ENCODE measurements at regions of chr15 and their contacts with region 1.

Region 1: DNA sequence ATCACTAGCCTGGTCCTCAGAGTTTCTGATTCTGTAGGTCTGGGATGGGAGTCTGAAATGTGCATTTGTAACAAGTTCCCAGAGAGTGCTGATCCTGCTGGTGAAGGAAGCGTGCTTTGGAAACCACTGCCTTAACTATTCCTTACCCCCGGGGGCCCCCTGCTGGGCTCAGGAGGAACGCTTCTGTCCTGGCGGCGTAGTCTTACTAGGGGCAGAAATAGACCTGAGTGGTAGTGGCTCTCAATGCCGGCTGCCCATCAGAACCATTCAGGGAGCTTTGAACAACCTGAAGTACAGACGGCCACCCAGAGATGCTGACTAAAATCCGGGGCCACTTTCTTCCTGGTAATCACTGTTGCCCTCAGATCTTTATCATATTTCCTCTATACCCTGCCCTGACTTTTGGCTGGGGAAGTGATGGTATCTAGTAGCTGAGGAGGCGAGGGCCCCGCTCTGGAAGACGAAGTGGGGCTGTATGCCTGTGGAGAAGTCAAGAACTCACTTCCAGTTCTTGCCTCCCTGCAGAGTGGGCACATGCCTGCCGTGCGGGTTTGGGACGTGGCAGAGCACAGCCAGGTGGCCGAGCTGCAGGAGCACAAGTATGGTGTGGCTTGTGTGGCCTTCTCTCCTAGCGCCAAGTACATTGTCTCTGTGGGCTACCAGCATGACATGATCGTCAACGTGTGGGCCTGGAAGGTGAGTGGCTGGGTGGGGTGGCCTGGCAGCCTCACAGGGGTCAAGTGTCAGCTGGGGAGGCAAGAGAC is 16.3 kb upstream of the JMJD7 start:
- DNase-seq: peak; percentile 60
- H3K4me3 ChIP-seq: no peak overlapping the region
- H3K27ac ChIP-seq: no peak overlapping the region
- H3K4me1 ChIP-seq: peaks cover 24% of the 10 kb centered on the region
- H3K27me3 ChIP-seq: no peaks in the 10 kb centered on the region
- CTCF ChIP-seq: peak; percentile 87 to 93

Region 2: GRCh38 chr15:41465822-41466421 is 345.7 kb before region 1 on chr15:
- CTCF ChIA-PET with region 1: no interaction called
- dilution Hi-C with region 1: no loop called
- in situ Hi-C with region 1: no loop called
- intact Hi-C with region 1: loop called (anchors 2 kb)
- DNase-seq: peak; percentile 37
- H3K4me3 ChIP-seq: no peak overlapping the region
- H3K27ac ChIP-seq: no peak overlapping the region
- H3K4me1 ChIP-seq: no peaks in the 10 kb centered on the region
- H3K27me3 ChIP-seq: no peaks in the 10 kb centered on the region
- CTCF ChIP-seq: peak; percentile 99 to 100

Region 3: GRCh38 chr15:41557673-41558399 is 253.8 kb before region 1 on chr15:
- CTCF ChIA-PET with region 1: no interaction called
- dilution Hi-C with region 1: no loop called
- in situ Hi-C with region 1: no loop called
- intact Hi-C with region 1: loop called (anchors 1 kb)
- DNase-seq: peak; percentile 49
- H3K4me3 ChIP-seq: peak overlapping the region in 2 of 3 experiments; percentile 42 to 51
- H3K27ac ChIP-seq: no peak overlapping the region
- H3K4me1 ChIP-seq: peaks cover 17% of the 10 kb centered on the region
- H3K27me3 ChIP-seq: no peaks in the 10 kb centered on the region
- CTCF ChIP-seq: peak; percentile 88 to 92

Region 4: DNA sequence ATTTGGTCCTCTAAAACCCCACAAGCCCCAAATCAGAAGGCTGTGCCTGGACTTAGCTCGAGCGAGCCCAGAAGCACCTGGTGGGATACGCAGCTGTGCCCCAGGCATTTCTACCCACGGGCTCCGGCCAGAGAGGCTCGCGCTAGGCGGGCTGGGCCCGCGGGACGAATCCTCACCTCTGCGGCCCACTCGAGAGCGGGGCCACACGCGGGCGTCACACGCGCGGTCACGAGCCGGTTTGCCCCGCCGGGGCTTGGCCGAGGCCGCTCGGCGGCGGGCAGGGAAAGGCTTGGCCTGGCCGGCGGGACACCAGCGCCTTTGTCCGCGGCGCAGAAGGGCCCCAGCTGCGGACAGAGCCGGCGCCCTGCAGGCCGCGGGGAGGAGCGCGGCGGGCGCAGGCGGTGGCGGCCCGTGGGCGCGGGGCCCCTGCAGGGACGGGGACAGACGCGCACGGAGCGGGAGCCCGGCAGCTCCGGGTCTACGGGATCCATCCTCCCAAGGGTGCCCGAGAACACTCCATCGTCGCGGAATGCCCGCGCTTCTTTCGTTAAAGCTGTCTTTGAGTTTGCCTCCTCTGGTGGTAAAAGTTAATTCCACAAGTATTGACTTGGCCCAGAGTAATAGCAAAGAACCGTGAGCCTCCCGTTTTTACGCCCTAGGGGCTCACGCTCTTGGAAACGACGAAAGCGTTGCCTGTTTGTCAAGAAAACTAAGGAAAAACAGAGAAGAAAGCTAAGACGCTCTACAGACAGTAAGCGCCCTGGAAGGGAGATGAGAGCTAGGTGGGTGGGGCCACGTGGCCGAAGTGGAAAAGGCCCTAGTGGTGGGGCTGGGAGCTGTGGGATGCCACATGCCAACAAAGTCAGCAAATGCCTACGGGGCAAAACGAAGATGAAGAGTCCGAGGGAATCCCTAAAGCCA is 226.2 kb before region 1 on chr15:
- CTCF ChIA-PET with region 1: interaction called, 21 read pairs
- dilution Hi-C with region 1: no loop called
- in situ Hi-C with region 1: no loop called
- intact Hi-C with region 1: no loop called
- DNase-seq: peak; percentile 55
- H3K4me3 ChIP-seq: peak overlapping the region; percentile 6 to 45 (median 34)
- H3K27ac ChIP-seq: no peak overlapping the region
- H3K4me1 ChIP-seq: peaks cover 12% of the 10 kb centered on the region
- H3K27me3 ChIP-seq: no peaks in the 10 kb centered on the region
- CTCF ChIP-seq: peak; percentile 11 to 26

Region 5: DNA sequence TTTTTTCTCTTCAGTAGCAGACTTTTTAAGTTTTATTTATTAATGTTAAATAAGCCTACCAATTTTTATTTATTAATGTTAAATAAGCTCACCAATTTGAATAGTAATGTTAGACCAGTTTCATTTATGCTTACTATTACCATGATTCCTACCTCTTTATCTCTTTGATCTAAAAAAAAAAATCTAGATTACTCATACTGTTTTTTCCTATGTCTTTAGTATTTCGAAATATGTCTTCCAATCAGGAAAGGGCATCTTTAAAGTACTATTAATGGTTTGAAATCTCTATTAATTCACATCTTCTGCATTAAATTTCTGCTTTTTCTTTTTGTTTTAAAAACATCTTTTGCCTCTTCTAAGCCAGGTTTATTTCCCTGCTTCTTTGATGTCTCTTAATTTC is 64.8 kb before region 1 on chr15:
- CTCF ChIA-PET with region 1: no interaction called
- dilution Hi-C with region 1: loop called (anchors 5 kb)
- in situ Hi-C with region 1: no loop called
- intact Hi-C with region 1: no loop called
- DNase-seq: peak; percentile 19
- H3K4me3 ChIP-seq: no peak overlapping the region
- H3K27ac ChIP-seq: no peak overlapping the region
- H3K4me1 ChIP-seq: no peaks in the 10 kb centered on the region
- H3K27me3 ChIP-seq: no peaks in the 10 kb centered on the region
- CTCF ChIP-seq: no peak

Region 6: DNA sequence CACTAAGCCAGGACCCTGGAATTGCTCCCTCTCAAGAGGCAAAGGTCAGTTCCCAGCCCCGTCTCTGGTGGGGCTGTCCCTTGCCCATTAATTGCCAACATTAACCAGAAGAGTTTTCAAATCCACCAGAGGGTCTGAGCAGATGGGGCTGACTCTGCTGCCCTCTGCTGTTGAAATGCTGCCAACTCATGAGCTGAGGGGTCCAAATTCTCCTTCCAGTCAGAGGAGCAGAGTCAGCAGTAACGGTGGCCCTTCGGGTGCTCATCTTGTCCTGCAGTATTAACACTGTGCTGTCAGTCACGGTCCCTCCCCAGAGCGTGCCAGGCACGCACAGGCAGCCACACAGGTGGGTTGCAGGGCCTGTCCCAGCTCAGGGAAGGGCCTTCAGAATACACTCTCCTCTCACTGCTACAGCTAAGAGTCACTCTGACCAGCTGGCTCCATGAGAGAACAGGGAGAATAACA is 93.0 kb after region 1 on chr15:
- CTCF ChIA-PET with region 1: no interaction called
- dilution Hi-C with region 1: loop called (anchors 5 kb)
- in situ Hi-C with region 1: no loop called
- intact Hi-C with region 1: loop called (anchors 1 kb)
- DNase-seq: peak; percentile 42
- H3K4me3 ChIP-seq: no peak overlapping the region
- H3K27ac ChIP-seq: no peak overlapping the region
- H3K4me1 ChIP-seq: no peaks in the 10 kb centered on the region
- H3K27me3 ChIP-seq: no peaks in the 10 kb centered on the region
- CTCF ChIP-seq: peak; percentile 80 to 88